Mammary epithelial cell (primary cell): ENCODE measurements at regions of chr3 and their contacts with region 1.

Region 1: GRCh38 chr3:39208463-39209055 is 16.2 kb upstream of the XIRP1 start:
- DNase-seq: peak; percentile 50
- H3K4me3 ChIP-seq: no peak overlapping the region
- H3K27ac ChIP-seq: no peak overlapping the region
- H3K4me1 ChIP-seq: no peaks in the 10 kb centered on the region
- H3K27me3 ChIP-seq: peaks cover 3% of the 10 kb centered on the region
- CTCF ChIP-seq: peak; percentile 65 to 81

Region 2: DNA sequence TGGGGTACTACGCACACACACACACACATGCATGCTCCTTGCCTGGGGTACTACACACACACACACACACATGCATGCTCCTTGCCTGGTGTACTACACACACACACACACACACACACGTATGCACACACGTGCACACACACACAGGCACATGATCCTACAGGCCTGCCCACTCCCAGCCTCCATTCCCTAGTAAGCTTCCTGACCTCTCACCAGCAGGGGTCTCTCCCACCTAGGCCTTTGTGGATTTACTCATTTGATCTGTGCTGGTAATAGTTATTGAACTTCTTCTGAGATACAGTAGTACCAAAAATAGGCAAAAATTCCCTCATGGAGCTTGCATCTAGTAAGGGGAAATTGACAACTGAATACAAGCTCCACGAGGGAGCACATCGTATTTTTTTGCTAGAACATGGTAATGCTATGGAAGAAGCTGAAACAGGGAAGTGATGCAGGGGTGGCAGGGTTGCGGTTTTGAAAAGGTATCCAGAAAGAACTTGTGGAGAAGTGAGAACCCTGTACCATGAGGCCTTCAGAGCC is 82.0 kb before region 1 on chr3:
- CTCF ChIA-PET with region 1: no interaction called
- dilution Hi-C with region 1: no loop called
- in situ Hi-C with region 1: no loop called
- intact Hi-C with region 1: loop called (anchors 1 kb)
- DNase-seq: peak; percentile 24
- H3K4me3 ChIP-seq: no peak overlapping the region
- H3K27ac ChIP-seq: no peak overlapping the region
- H3K4me1 ChIP-seq: peaks cover 14% of the 10 kb centered on the region
- H3K27me3 ChIP-seq: no peaks in the 10 kb centered on the region
- CTCF ChIP-seq: peak; percentile 28 to 67